Activated CD4-positive, alpha-beta memory T cell treated with anti-CD3 and anti-CD28 coated beads for 36 hours (primary cell): ENCODE measurements at regions of chr5 and their contacts with region 1.

Region 1: GRCh38 chr5:96601811-96602244 is 60.3 kb upstream of the CAST start:
- DNase-seq: peak; percentile 43
- H3K4me3 Mint-ChIP-seq: no peak overlapping the region
- H3K27ac Mint-ChIP-seq: no peak overlapping the region
- H3K4me1 Mint-ChIP-seq: peaks cover 13% of the 10 kb centered on the region
- H3K27me3 Mint-ChIP-seq: peaks cover 2% of the 10 kb centered on the region

Region 2: DNA sequence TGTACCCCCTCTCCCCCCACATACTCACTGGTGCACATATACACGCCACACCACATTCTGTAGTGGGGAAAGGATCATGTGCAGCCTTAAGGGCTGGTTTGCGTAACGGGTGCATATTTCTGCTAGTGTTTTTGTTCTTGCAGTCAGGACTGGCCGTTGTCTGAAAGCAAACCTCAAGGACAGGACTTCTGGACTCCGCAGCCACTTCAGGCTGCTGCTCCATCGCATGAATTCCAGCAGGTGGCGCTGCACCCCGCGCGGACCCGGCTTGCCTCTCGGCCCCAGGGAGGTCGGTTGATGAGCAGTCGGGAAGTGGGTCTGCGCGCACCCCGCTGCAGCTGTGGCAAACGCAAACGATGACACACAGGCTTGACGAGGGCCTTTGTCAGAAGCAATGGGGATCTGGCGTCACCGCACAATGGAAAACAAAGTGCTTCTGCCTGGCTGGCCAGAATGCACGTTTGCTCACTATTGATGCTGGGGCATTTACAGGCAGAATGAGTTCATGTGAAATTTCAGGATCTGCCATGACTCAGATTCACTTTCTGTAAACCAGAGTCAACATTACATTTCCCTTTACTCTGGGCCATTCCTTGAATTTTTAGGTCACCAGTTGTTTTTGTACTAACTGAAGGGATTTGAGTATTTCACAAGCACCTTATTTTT is 743.0 kb before region 1 on chr5:
- CTCF ChIA-PET with region 1: interaction called, 7 read pairs
- POLR2A ChIA-PET with region 1: no interaction called
- intact Hi-C with region 1: loop called (anchors 1 kb)
- DNase-seq: peak; percentile 97
- H3K4me3 Mint-ChIP-seq: peak overlapping the region; percentile 40
- H3K27ac Mint-ChIP-seq: peak overlapping the region; percentile 68
- H3K4me1 Mint-ChIP-seq: peaks cover 55% of the 10 kb centered on the region
- H3K27me3 Mint-ChIP-seq: no peaks in the 10 kb centered on the region

Region 3: DNA sequence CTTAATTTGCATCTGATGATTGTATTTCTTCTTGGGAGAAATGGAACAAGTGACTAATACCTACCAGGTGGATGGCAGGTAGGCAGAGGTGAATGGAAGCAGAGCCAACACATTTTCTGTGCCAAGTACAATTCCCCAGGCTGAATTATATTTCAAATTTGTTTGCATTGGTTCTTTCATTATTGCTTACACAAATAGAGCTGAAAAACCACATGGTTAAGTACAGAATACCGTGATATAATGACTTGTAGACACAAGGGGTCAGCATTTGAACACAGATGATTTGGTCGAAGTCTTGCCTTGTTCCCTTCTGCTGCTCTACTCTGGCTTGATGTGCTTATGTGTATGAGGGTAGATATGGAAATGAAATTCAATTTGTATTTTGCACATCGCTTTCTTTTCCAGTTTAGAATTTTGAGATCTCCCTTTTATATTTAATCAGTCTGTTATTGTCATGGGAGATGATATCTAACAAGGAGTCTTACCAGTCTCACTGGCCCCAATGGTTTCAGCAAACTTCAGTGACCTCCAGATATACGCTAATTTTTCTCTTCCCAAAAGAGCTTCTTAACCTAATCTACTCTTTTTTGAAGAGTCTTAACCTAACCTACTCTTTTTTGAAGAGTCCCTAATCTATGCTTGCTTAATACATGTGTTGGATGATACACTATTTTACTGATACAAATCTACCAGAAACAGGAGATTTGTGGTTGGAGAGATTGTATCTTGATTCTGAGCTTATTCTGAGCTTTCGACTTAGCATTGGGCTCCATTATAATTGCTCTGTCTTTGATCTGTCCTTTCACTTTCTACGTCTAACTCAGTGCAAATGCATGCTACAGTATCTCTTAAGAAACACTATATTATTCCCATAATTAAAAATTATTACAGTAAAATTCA is 256.9 kb before region 1 on chr5:
- CTCF ChIA-PET with region 1: interaction called, 130 read pairs
- POLR2A ChIA-PET with region 1: interaction called, 3 read pairs
- intact Hi-C with region 1: loop called (anchors 1 kb)
- DNase-seq: no peak
- H3K4me3 Mint-ChIP-seq: no peak overlapping the region
- H3K27ac Mint-ChIP-seq: no peak overlapping the region
- H3K4me1 Mint-ChIP-seq: peaks cover 27% of the 10 kb centered on the region
- H3K27me3 Mint-ChIP-seq: peaks cover 26% of the 10 kb centered on the region

Region 4: GRCh38 chr5:96434201-96434645 is 167.6 kb before region 1 on chr5:
- CTCF ChIA-PET with region 1: interaction called, 6 read pairs
- POLR2A ChIA-PET with region 1: interaction called, 3 read pairs
- intact Hi-C with region 1: loop called (anchors 5 kb)
- DNase-seq: peak; percentile 69
- H3K4me3 Mint-ChIP-seq: no peak overlapping the region
- H3K27ac Mint-ChIP-seq: no peak overlapping the region
- H3K4me1 Mint-ChIP-seq: peaks cover 19% of the 10 kb centered on the region
- H3K27me3 Mint-ChIP-seq: peaks cover 65% of the 10 kb centered on the region

Region 5: DNA sequence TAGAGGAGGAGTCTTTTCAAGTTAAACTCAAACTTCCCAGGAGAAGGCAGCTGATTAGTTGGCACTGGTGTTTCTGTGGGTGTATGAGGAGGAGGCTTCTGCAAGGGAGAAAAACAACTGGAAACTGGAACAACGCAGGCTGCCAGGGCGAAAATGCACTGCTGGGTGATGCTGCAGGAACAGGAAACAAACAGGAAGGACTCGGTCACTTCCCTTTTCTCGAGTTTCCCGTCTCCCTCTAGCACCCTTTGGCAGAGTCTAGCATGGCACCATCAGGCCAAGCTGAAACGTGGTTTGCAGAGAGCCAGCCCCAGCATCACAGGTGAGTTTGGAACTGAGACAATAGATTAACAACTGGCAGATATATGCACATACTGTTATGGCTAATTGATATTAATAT is 17.1 kb before region 1 on chr5:
- CTCF ChIA-PET with region 1: interaction called, 19 read pairs
- POLR2A ChIA-PET with region 1: no interaction called
- intact Hi-C with region 1: no loop called
- DNase-seq: no peak
- H3K4me3 Mint-ChIP-seq: no peak overlapping the region
- H3K27ac Mint-ChIP-seq: no peak overlapping the region
- H3K4me1 Mint-ChIP-seq: peaks cover 8% of the 10 kb centered on the region
- H3K27me3 Mint-ChIP-seq: peaks cover 19% of the 10 kb centered on the region

Region 6: DNA sequence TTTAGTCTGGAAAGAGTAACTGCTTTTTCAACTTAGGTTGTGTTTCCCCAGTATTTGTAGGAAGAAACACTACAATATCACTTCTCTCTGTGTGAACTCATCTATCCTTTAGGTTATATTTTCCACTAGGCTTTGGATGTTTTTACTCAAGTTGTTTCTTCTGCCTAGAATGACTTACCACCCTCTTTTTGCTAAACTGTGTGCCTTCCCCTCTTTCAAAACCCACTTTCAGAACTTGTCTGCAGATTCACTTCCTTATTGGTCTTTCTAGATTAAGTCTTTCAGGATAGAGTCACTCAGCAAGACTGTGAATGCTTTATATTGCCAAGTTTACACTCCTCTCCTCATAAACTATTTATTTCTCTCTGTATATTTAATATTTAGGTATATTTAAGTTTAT is 46.2 kb after region 1 on chr5:
- CTCF ChIA-PET with region 1: no interaction called
- POLR2A ChIA-PET with region 1: no interaction called
- intact Hi-C with region 1: no loop called
- DNase-seq: no peak
- H3K4me3 Mint-ChIP-seq: no peak overlapping the region
- H3K27ac Mint-ChIP-seq: no peak overlapping the region
- H3K4me1 Mint-ChIP-seq: peaks cover 4% of the 10 kb centered on the region
- H3K27me3 Mint-ChIP-seq: peaks cover 13% of the 10 kb centered on the region